Breast epithelium (tissue), 4 donors: ENCODE measurements at regions of chr5 and their contacts with region 1.

Region 1: DNA sequence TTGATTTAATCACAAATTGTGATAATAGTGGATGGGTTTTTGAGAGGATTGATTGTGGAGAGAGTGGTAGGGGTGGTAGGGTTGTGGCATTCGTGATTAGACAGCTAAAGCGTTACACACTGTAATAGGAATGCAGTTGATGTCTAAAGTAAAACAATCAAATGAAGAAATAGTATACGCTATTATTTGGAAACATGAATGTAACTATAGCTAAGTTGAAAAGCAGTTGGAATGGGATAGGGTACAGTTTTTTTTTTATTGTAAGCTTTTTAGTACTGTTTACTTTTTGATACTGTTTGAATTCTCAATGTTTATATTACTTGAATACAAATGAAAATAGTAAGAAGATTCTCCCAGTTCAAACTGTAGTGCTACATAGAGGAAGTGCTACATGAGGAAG is 51.8 kb downstream of the RANBP17 start:
- DNase-seq: no peak
- H3K4me3 ChIP-seq: no peak overlapping the region
- H3K27ac ChIP-seq: no peak overlapping the region
- H3K4me1 ChIP-seq: no peaks in the 10 kb centered on the region
- H3K27me3 ChIP-seq: no peaks in the 10 kb centered on the region
- CTCF ChIP-seq: no peak
- POLR2A ChIP-seq: no peak

Region 2: DNA sequence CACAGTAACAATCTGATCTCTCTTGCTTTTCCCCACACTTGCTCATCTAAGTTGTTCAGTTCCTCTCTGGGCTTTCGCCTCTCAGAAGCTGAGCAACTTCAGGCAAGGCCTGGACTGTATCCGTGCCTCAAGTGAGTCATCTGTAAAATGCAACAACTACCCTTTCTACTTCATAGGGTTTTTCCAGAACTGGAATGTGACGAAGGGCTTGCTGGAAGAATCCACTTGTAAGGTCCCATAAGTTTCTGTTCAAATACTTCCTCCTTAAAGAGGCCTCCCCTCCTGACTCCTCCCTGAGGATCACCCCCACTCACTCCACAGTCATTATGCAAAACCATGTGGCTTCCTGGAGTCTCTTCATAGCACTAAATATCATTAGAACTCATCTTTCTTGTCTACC is 915.8 kb before region 1 on chr5:
- intact Hi-C with region 1: loop called (anchors 5 kb)
- DNase-seq: no peak
- H3K4me3 ChIP-seq: no peak overlapping the region
- H3K27ac ChIP-seq: no peak overlapping the region
- H3K4me1 ChIP-seq: no peaks in the 10 kb centered on the region
- H3K27me3 ChIP-seq: no peaks in the 10 kb centered on the region
- CTCF ChIP-seq: no peak
- POLR2A ChIP-seq: no peak